Adrenal gland (tissue), 19 donors: ENCODE measurements at regions of chr12 and their contacts with region 1.

Region 1: DNA sequence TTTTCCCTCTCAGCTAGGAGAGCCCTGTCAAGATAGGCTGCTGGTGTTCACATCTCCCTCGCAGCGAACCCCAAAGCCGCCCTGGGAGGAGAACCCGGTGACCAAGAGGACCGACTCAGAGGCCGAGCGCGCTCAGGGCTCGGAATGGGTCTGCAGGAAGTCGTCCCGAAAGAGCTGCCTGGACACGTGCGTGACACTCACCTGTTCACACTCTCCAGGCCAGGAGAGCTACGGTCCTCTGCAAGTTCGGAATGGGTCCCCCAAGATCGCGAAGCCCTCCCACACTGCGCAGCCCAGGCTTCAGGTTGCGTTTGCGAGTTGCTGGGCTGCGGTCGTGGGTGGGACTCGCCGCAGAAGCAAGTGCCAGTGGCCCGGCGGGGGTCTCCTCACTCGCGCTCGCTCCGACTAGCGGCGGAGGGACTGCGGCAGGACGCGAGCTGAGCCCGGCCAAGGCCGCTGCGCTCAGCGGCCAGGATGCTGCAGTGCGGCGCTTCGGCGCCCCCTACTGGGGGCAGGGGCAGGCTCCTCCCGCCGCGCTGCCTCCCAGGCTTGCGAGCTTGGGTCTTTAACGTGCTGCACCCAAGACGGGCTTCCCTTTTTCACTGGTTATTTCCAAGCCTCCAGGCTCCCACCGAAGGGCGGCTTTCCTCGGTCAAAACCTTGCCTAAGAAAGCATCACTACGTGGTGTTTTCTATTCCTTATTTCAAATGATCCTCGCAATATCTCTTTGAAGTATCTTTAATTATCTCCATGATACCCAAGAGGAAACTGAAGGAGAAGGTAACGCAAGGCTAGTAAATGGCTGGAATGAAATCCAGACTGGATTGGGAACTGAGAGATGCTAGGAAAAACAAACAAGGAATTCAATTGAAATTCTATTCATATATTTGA is at the start of gene RERG:
- DNase-seq: peak; percentile 76 to 90 (median 83)
- H3K4me3 ChIP-seq: peak within 1 kb of the TSS in 3 of 4 donors; percentile 58 to 62 (median 62)
- H3K27ac ChIP-seq: peak within 1 kb of the TSS; percentile 10 to 89 (median 78)
- H3K4me1 ChIP-seq: peaks cover 0 to 33% of the 10 kb centered on the region in 2 donors
- H3K27me3 ChIP-seq: no peaks in the 10 kb centered on the region
- CTCF ChIP-seq: peak; percentile 90 to 99 (median 96)
- POLR2A ChIP-seq: peak in 1 of 2 donors; percentile 45
- total RNA-seq, gene RERG: 12.9 to 146 (median 86.1) TPM

Region 2: GRCh38 chr12:15001733-15002382 is 219.4 kb before region 1 on chr12:
- intact Hi-C with region 1: loop called in 1 of 2 experiments (anchors 5 kb)
- DNase-seq: peak in 6 of 7 donors; percentile 53 to 79 (median 62)
- H3K4me3 ChIP-seq: no peak overlapping the region
- H3K27ac ChIP-seq: peak overlapping the region in 1 of 5 donors; percentile 26
- H3K4me1 ChIP-seq: peaks cover 0 to 21% of the 10 kb centered on the region in 2 donors
- H3K27me3 ChIP-seq: no peaks in the 10 kb centered on the region
- CTCF ChIP-seq: no peak
- POLR2A ChIP-seq: no peak

Region 3: DNA sequence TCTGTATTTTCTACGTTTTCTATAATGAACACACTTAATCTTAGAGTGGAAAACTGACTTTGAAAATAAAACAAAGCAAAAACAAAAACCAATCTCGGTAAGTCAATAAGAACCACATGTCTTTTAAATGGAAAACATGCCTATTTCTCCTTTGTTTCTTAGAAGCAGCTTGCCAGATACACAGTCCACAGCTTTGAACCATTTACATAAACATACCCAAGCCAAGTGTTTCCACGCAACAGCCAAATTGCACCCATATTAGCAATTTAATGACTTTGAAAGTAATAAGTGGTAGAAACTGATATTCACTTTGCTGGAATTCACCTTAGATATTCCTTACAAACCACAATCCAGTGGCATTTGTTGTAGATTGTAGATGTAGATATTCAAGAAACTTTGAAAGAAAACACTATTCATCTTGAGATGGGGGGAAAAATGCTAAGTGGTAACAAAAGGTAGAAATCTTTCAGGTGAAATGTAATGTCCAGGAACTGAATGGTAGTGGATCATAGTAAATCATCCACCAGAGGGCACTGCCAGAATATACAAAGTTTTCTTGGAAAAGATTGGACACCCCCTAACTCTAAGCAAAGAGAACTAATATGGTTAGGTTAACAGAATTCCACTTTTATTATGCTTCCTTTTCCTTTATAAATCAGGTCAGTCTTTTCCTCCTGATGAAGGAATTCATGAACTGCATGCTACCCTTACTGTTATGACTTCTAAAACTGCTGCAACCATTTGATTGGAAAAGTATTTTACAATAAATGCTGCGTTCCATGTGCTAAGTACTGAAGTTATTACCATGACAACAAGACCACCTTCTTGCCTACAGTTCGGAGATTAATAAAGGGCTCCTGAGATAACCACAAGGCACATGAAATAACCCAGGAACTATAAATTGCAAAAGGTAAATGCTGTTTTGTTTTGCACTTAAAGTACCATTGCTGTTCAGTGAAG is 69.8 kb before region 1 on chr12:
- intact Hi-C with region 1: loop called in 1 of 2 experiments (anchors 2 kb)
- DNase-seq: peak in 1 of 7 donors; percentile 32
- H3K4me3 ChIP-seq: peak overlapping the region in 1 of 4 donors; percentile 12
- H3K27ac ChIP-seq: peak overlapping the region in 2 of 5 donors; percentile 52 to 60
- H3K4me1 ChIP-seq: peaks cover 18 to 42% of the 10 kb centered on the region in 2 donors
- H3K27me3 ChIP-seq: no peaks in the 10 kb centered on the region
- CTCF ChIP-seq: peak; percentile 41 to 73 (median 61)
- POLR2A ChIP-seq: no peak

Region 4: GRCh38 chr12:15293731-15294130 is 72.5 kb after region 1 on chr12:
- intact Hi-C with region 1: no loop called
- DNase-seq: no peak
- H3K4me3 ChIP-seq: no peak overlapping the region
- H3K27ac ChIP-seq: no peak overlapping the region
- H3K4me1 ChIP-seq: no peaks in the 10 kb centered on the region
- H3K27me3 ChIP-seq: no peaks in the 10 kb centered on the region
- CTCF ChIP-seq: no peak
- POLR2A ChIP-seq: no peak

Region 5: GRCh38 chr12:15634010-15634683 is 412.9 kb after region 1 on chr12:
- intact Hi-C with region 1: no loop called
- DNase-seq: no peak
- H3K4me3 ChIP-seq: no peak overlapping the region
- H3K27ac ChIP-seq: peak overlapping the region in 1 of 5 donors; percentile 60
- H3K4me1 ChIP-seq: peaks cover 5 to 13% of the 10 kb centered on the region in 2 donors
- H3K27me3 ChIP-seq: no peaks in the 10 kb centered on the region
- CTCF ChIP-seq: no peak
- POLR2A ChIP-seq: no peak